Caco-2 (cell line): ENCODE measurements at regions of chr12 and their contacts with region 1.

Region 1: DNA sequence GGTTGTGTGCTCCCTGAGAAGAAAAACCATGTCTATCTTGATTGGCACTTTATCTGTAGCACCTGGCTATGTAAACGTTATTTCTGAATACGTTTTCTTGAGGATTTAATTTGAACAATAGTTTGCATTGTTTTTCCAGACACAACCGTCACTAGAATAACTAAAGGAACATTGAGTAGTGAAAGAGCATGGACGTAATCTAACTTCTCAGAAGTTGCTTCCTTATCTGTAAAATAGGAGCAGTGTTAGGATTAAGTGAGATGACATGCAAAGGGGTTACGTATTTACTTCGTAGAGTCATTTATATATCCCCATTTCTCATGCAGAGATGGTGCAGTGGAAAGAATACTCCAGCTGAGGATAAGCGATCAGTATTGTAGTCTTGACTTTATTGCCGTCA is 8.1 kb downstream of the AEBP2 start:
- DNase-seq: no peak
- H3K4me3 ChIP-seq: no peak overlapping the region
- H3K4me3 Mint-ChIP-seq: no peak overlapping the region
- H3K27ac Mint-ChIP-seq: no peak overlapping the region
- H3K4me1 ChIP-seq: 0 out of 2 replicates have a peak, but pooled peaks cover 4% of the 10 kb centered on the region
- H3K4me1 Mint-ChIP-seq: peaks cover 23% of the 10 kb centered on the region
- H3K27me3 ChIP-seq: no peaks in the 10 kb centered on the region
- H3K27me3 Mint-ChIP-seq: no peaks in the 10 kb centered on the region
- CTCF ChIP-seq: no peak

Region 2: GRCh38 chr12:19491863-19492262 is 44.5 kb after region 1 on chr12:
- CTCF ChIA-PET with region 1: no interaction called
- POLR2A ChIA-PET with region 1: no interaction called
- intact Hi-C with region 1: no loop called
- DNase-seq: no peak
- H3K4me3 ChIP-seq: no peak overlapping the region
- H3K4me3 Mint-ChIP-seq: no peak overlapping the region
- H3K27ac Mint-ChIP-seq: peak overlapping the region; percentile 30
- H3K4me1 ChIP-seq: no peaks in the 10 kb centered on the region
- H3K4me1 Mint-ChIP-seq: no peaks in the 10 kb centered on the region
- H3K27me3 ChIP-seq: no peaks in the 10 kb centered on the region
- H3K27me3 Mint-ChIP-seq: no peaks in the 10 kb centered on the region
- CTCF ChIP-seq: no peak

Region 3: GRCh38 chr12:19520646-19521415 is 73.4 kb after region 1 on chr12:
- CTCF ChIA-PET with region 1: no interaction called
- POLR2A ChIA-PET with region 1: no interaction called
- intact Hi-C with region 1: loop called (anchors 5 kb)
- DNase-seq: no peak
- H3K4me3 ChIP-seq: no peak overlapping the region
- H3K4me3 Mint-ChIP-seq: no peak overlapping the region
- H3K27ac Mint-ChIP-seq: no peak overlapping the region
- H3K4me1 ChIP-seq: no peaks in the 10 kb centered on the region
- H3K4me1 Mint-ChIP-seq: peaks cover 6% of the 10 kb centered on the region
- H3K27me3 ChIP-seq: no peaks in the 10 kb centered on the region
- H3K27me3 Mint-ChIP-seq: no peaks in the 10 kb centered on the region
- CTCF ChIP-seq: no peak

Region 4: GRCh38 chr12:19810213-19810612 is 362.8 kb after region 1 on chr12:
- CTCF ChIA-PET with region 1: no interaction called
- POLR2A ChIA-PET with region 1: no interaction called
- intact Hi-C with region 1: no loop called
- DNase-seq: no peak
- H3K4me3 ChIP-seq: no peak overlapping the region
- H3K4me3 Mint-ChIP-seq: no peak overlapping the region
- H3K27ac Mint-ChIP-seq: no peak overlapping the region
- H3K4me1 ChIP-seq: no peaks in the 10 kb centered on the region
- H3K4me1 Mint-ChIP-seq: no peaks in the 10 kb centered on the region
- H3K27me3 ChIP-seq: no peaks in the 10 kb centered on the region
- H3K27me3 Mint-ChIP-seq: no peaks in the 10 kb centered on the region
- CTCF ChIP-seq: no peak